CD8-positive, alpha-beta memory T cell (primary cell): ENCODE measurements at regions of chr7 and their contacts with region 1.

Region 1: DNA sequence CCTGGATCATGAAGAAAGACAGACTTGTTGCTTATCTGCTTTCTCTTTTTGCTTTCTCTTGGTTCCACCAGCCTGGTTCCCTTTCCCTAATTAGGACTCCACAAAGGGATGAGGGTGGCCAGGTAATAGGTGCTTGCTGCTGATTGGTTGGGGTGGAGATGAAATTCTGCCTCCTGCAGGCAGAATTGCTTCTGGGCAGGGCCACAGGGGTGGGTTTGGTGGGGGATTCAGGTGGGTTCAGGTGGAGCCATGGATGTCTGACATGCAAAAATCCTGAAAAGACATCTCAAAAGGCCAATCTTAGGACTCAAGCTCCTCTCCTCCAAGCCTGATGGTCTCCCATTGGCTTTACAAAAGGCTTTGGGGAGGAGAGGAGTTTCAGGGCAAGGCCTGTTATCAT is 25.4 kb upstream of the ACHE start:
- DNase-seq: no peak
- H3K4me3 ChIP-seq: no peak overlapping the region
- H3K4me3 Mint-ChIP-seq: no peak overlapping the region
- H3K27ac ChIP-seq: no peak overlapping the region
- H3K27ac Mint-ChIP-seq: no peak overlapping the region
- H3K4me1 ChIP-seq: no peaks in the 10 kb centered on the region
- H3K4me1 Mint-ChIP-seq: peaks cover 0 to 5% (median 0%) of the 10 kb centered on the region in 3 donors
- H3K27me3 ChIP-seq: no peaks in the 10 kb centered on the region
- H3K27me3 Mint-ChIP-seq: peaks cover 15 to 58% of the 10 kb centered on the region in 2 donors

Region 2: DNA sequence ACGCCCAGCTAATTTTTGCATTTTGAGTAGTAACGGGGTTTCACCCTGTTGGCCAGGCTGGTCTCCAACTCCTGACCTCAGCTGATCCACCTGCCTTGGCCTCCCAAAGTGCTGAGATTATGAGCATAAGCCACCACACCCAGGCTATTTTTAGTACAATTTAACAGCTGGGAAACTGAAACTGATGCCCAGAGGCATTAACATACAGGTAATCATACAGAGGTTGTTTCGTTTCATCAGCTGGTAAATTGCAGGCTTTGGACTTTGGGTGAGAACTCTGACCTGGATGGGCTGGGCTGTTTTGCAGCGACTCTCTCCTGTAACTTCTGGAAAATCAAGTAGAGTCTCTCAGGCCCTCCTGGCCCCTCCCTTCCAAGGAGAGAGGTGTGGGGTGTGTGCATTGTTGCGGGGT is 19.1 kb before region 1 on chr7:
- CTCF ChIA-PET with region 1: no interaction called
- POLR2A ChIA-PET with region 1: no interaction called
- DNase-seq: no peak
- H3K4me3 ChIP-seq: no peak overlapping the region
- H3K4me3 Mint-ChIP-seq: no peak overlapping the region
- H3K27ac ChIP-seq: no peak overlapping the region
- H3K27ac Mint-ChIP-seq: no peak overlapping the region
- H3K4me1 ChIP-seq: no peaks in the 10 kb centered on the region
- H3K4me1 Mint-ChIP-seq: peaks cover 0 to 7% (median 1%) of the 10 kb centered on the region in 3 donors
- H3K27me3 ChIP-seq: peaks cover 9% of the 10 kb centered on the region
- H3K27me3 Mint-ChIP-seq: peaks cover 20 to 29% of the 10 kb centered on the region in 2 donors

Region 3: DNA sequence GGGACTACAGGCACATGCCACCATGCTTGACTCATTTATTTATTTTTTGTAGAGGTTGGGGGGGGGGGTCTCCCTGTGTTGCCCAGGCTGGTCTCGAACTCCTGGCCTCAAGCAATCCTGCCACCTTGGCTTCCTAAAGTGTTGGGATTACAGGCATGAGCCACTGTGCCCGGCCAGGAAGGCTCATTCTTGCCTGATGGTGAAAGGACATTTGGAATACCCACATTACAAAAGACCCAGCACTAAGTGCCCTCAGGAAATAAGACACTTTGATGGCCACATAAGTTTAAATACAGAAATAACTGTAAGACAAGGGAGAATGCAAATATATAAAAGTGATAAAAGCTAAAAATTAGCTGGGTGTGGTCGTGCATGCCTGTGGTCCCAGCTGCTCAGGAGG is 197.8 kb after region 1 on chr7:
- CTCF ChIA-PET with region 1: no interaction called
- POLR2A ChIA-PET with region 1: interaction called, 11 read pairs
- DNase-seq: no peak
- H3K4me3 ChIP-seq: no peak overlapping the region
- H3K4me3 Mint-ChIP-seq: no peak overlapping the region
- H3K27ac ChIP-seq: no peak overlapping the region
- H3K27ac Mint-ChIP-seq: no peak overlapping the region
- H3K4me1 ChIP-seq: no peaks in the 10 kb centered on the region
- H3K4me1 Mint-ChIP-seq: peaks cover 0 to 6% (median 0%) of the 10 kb centered on the region in 3 donors
- H3K27me3 ChIP-seq: no peaks in the 10 kb centered on the region
- H3K27me3 Mint-ChIP-seq: peaks cover 40 to 56% of the 10 kb centered on the region in 2 donors